Spleen (tissue), 13 donors: ENCODE measurements at regions of chr12 and their contacts with region 1.

Region 1: DNA sequence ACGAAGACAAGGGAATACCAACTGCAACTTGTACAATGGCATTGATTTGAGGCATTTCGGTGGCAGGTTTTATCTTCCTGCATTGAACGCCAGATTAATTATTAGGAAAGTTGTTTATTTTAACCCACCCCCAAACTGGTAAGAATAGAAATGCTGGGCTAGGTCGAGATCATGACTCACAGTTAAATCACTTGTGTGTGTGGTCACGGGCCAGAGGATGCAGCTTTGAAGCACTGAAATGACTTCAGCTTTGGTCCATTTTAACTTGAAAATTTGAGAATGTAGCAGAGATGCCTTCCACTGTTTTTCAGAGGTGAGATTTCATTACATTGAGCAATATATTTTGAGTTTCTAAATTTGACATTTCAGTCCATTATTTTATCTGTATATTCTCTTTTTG is 23.6 kb upstream of the KCNH3 start:
- DNase-seq: no peak
- H3K4me3 ChIP-seq: no peak overlapping the region
- H3K27ac ChIP-seq: no peak overlapping the region
- H3K4me1 ChIP-seq: peaks cover 0 to 4% (median 0%) of the 10 kb centered on the region in 6 donors
- H3K27me3 ChIP-seq: no peaks in the 10 kb centered on the region
- CTCF ChIP-seq: no peak
- POLR2A ChIP-seq: no peak

Region 2: DNA sequence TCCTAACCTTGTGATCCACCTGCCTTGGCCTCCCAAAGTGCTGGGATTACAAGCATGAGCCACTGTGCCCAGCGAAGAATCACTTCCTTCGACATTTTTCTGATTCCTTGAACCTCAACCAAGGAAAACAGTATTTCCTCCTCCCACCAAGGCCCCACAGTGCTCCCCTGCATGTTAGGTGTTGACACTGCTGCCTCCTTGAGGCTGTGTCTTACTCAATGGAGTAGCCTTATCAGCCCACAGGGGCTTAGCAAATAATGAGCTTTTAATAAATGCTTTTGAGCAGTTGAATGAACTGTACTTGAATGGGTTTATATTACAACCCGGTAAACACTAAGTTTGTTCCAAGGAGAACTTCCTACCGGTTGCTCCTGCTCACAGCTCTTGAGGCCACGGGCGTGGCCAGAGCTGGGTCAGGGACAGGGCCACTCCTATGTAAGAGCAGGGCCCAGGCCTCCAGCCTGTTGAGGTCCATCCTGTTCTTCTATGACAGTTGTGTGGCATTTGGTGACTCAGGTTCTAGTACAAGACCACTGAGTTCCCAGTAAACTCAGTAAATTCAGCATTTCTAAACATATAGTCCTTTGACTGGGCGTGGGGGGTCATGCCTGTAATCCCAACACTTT is 289.6 kb before region 1 on chr12:
- intact Hi-C with region 1: no loop called
- DNase-seq: no peak
- H3K4me3 ChIP-seq: no peak overlapping the region
- H3K27ac ChIP-seq: peak overlapping the region in 3 of 8 donors; percentile 22 to 52 (median 48)
- H3K4me1 ChIP-seq: peaks cover 0 to 59% (median 30%) of the 10 kb centered on the region in 6 donors
- H3K27me3 ChIP-seq: no peaks in the 10 kb centered on the region
- CTCF ChIP-seq: no peak
- POLR2A ChIP-seq: no peak

Region 3: DNA sequence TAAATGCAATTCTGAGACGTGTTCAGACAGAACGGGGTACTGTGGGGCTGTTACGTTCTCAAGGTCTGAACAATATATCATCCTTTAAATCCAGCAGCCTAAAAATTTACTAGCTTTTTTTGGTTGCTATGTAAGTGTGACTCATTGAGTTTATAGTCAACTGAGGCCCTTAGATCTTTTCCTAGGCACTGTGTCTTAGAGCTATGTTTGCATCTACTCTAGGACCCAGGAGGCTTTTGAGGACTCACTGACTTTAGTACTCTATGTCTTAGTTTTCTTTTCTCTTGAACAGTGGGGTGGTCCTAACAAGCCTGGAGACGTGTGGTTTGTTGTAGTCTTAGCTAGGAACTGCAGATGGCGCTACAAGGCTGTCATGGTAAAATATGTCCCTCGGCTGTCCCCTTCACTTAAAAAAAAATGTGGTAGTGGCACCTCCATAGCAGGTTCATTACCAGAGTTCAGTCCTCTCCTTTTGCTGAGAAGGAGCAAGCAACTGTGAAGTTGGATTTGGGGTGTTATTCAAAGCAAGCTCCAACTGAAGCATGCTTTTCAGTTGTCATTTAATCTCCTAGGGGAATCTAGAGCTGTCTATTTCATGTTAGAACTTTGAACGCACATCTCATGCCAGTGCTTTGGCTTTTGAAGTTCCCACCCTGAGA is 156.7 kb before region 1 on chr12:
- intact Hi-C with region 1: loop called (anchors 2 kb)
- DNase-seq: no peak
- H3K4me3 ChIP-seq: no peak overlapping the region
- H3K27ac ChIP-seq: no peak overlapping the region
- H3K4me1 ChIP-seq: peaks cover 0 to 10% (median 2%) of the 10 kb centered on the region in 6 donors
- H3K27me3 ChIP-seq: peaks cover 0 to 42% (median 0%) of the 10 kb centered on the region in 7 donors
- CTCF ChIP-seq: peak; percentile 56 to 83 (median 75)
- POLR2A ChIP-seq: no peak

Region 4: DNA sequence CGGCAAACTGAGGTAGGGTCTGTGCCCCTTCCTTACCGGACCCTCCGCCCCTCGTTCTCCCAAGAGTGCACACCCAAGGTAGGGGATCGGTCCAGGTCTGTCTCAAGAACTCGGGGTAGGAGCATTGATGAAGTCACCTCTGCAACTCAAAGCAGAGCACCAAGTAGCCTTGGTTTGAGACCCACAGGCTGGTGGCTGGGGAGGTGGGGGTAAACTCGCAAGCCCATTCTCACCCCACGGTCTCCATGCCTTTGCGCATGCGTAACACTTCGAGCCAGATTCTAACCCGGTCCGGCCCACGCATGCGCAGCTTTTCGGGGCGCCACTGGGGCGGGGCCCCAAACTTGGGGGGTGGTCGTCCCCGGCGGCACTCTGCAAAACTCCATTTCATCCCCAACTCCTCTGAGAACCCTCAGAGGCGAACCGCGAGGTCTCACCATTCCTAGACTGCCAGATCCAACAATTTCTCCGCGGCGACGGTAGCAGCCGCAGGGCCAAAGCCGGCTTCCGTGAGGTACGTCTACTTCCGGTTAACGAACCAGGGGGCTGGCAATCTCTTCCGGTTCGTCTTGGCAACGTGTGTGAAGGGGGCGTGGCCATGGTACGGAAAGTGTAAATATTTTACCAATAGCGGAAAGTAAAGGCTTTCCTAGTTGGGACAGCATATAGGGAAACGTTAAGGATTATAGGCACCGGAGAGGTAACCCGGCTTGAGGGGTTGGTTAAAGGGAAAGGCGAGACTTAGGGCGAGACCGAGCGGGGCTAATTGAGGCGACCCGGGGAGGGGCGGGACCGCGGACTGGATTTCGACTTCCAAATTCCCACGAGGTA is 52.6 kb after region 1 on chr12 and contains the start of gene MCRS1:
- intact Hi-C with region 1: no loop called
- DNase-seq: peak; percentile 95
- H3K4me3 ChIP-seq: peak within 1 kb of the TSS; percentile 74 to 100 (median 96)
- H3K27ac ChIP-seq: peak within 1 kb of the TSS; percentile 91 to 99 (median 96)
- H3K4me1 ChIP-seq: peaks cover 15 to 67% (median 51%) of the 10 kb centered on the region in 6 donors
- H3K27me3 ChIP-seq: no peaks in the 10 kb centered on the region
- CTCF ChIP-seq: no peak
- POLR2A ChIP-seq: peak in 1 of 3 donors; percentile 26
- total RNA-seq, gene MCRS1: 44.3 to 63.5 (median 54.2) TPM